HEK293 (cell line): ENCODE measurements at regions of chr5 and their contacts with region 1.

Region 1: DNA sequence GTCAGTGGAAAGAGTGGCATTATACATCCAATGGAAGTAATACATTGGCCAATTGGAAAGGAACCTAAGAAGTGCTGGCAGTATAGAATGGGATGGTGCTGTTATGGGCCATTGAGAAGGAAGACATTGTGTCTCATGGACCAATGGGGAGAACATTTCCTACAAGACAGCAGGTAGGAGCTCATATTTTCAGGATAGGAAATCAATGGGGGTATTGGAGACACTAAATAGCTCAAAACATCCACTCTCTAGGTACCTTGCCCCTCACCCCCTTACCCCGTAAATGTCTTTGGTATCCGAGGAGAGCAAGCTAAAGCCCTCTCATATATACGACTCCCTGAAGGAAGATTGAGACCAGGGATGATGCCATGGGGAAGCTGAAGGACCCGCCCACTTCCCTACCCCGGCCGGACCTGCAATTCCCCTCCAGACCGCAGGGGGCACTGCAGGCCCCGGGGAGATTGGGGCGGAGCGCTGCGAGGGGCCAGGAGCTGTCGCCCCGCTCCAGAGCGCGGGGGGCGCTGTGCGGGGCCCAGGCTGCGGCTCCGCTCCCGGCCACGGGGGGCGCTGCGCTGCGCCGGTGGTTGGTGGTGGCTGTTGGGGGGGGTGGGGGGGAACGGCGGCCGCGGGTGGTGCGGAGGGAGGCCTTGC is at the start of gene KDM3B:
- H3K4me3 ChIP-seq: peak within 1 kb of the TSS; percentile 83
- H3K27ac ChIP-seq: peak within 1 kb of the TSS; percentile 92
- H3K4me1 ChIP-seq: peaks cover 18% of the 10 kb centered on the region
- CTCF ChIP-seq: peak; percentile 98

Region 2: GRCh38 chr5:138213161-138214029 is 138.8 kb before region 1 on chr5 and contains the start of gene CDC23:
- CTCF ChIA-PET with region 1: interaction called, 5 read pairs
- POLR2A ChIA-PET with region 1: interaction called, 21 read pairs
- H3K4me3 ChIP-seq: peak within 1 kb of the TSS; percentile 94
- H3K27ac ChIP-seq: peak within 1 kb of the TSS; percentile 77
- H3K4me1 ChIP-seq: peaks cover 7% of the 10 kb centered on the region; the same call in 1 of the 2 replicates
- CTCF ChIP-seq: no peak; the same call in 1 of the 2 replicates

Region 3: DNA sequence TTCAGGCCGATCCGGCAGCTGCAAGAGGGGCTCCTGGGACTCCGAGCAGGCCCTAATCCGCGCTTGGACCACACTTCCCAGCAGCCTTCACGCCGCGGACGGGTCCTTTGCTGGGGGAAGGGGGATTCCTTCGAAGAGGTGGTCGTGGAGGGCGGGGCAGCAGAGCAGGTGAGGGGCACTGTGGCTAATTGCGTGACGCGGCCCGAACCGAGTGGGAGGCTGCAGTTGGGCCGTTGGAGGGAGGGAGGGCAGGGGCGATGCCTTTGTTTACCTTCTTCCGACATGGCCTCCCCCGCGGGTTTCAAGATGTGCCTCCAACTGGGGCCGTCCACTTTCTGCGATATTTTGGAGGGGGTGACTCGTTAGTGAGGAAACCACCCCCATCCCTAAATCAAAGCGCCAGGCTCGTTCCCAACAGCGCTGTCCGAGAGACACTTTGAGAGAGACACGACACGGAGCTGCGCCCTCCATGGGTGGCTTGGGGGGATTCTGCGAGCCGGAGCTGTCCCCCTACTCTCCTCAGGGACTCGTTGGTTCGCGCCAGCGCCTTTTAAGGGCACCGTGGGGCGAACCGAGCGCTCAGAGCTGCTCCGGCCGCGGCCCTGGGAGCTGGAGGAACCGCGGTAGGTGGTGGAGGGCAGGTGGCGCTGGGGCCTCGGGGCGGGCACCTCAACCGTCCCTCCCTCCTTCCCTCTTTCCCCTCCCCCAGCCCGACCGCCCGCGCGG is 14.3 kb before region 1 on chr5 and contains the start of gene FAM53C:
- CTCF ChIA-PET with region 1: interaction called, 273 read pairs
- POLR2A ChIA-PET with region 1: interaction called, 114 read pairs
- H3K4me3 ChIP-seq: peak within 1 kb of the TSS; percentile 83
- H3K27ac ChIP-seq: peak within 1 kb of the TSS; percentile 98
- H3K4me1 ChIP-seq: peaks cover 8% of the 10 kb centered on the region
- CTCF ChIP-seq: peak; percentile 58; the same call in 1 of the 2 replicates

Region 4: DNA sequence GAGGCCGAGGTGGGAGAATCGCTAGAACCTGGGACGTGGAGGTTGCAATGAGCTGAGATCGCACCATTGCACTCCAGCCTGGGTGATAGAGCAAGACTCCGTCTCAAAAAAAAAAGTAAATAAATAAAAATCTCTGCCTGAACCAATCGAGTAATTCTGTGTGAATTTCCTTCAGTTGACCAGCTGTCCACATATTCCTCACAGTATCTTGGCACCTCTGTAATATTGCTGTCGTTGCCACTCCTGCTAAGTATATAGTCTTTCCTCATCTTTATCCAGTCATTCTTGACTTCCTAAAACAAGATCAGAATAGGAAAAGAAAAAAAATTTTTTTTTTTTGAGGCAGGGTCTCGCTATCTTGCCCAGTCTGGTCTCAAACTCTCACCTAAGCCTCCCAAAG is 30.2 kb after region 1 on chr5:
- CTCF ChIA-PET with region 1: interaction called, 11 read pairs
- POLR2A ChIA-PET with region 1: no interaction called
- H3K4me3 ChIP-seq: no peak overlapping the region
- H3K27ac ChIP-seq: no peak overlapping the region
- H3K4me1 ChIP-seq: no peaks in the 10 kb centered on the region
- CTCF ChIP-seq: no peak

Region 5: DNA sequence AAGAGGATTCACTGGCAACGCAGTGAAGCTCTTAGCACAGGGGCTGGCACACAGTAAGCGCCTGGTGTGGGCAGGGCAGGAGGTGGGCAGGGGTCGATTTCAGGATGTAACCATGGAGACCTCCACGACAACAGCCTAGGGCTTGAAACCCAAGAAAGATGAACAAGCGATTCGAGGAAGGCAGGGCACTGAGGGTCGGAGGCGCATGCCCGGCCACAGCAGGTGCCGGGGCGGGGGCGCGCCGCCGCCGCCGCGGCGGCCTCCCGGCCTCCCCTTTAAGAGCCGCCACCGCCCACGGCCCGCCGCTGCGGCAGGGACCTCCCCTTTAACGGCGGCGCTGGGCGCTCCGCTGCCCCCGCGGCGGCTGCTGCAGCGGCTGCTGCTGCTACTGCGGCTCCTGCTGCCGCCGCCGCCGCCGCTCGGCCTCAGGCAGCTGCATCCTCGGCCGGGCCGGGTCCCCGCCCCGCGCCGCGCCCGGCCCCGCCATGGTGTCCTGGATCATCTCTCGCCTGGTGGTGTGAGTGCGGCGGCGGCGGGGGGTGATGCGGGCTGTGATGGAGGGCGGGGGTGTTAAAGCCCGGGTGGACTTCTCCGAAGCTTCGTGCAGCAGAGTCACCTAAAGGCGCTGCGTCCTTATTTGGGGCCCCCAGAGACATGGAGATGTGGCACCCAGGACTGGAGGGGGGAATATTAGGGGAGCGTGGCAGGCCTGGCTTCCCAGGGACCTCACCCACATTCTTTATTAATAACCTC is 86.7 kb after region 1 on chr5 and contains the start of gene REEP2:
- CTCF ChIA-PET with region 1: interaction called, 10 read pairs
- POLR2A ChIA-PET with region 1: no interaction called
- H3K4me3 ChIP-seq: peak within 1 kb of the TSS; percentile 60
- H3K27ac ChIP-seq: peak within 1 kb of the TSS; percentile 68; the same call in 1 of the 2 replicates
- H3K4me1 ChIP-seq: peaks cover 8% of the 10 kb centered on the region; the same call in 1 of the 2 replicates
- CTCF ChIP-seq: no peak

Region 6: GRCh38 chr5:138844812-138845513 is 492.8 kb after region 1 on chr5:
- CTCF ChIA-PET with region 1: no interaction called
- POLR2A ChIA-PET with region 1: no interaction called
- H3K4me3 ChIP-seq: no peak overlapping the region
- H3K27ac ChIP-seq: peak overlapping the region; percentile 5; the same call in 1 of the 2 replicates
- H3K4me1 ChIP-seq: peaks cover 22% of the 10 kb centered on the region
- CTCF ChIP-seq: no peak